ENCODE measurements at regions of chr6 and their contacts with region 1.

Region 1: GRCh38 chr6:145929037-145929633 is 35.0 kb downstream of the SHPRH start:
- DNase-seq: peak; percentile 53
- H3K4me3 ChIP-seq: no peak overlapping the region
- H3K27ac ChIP-seq: no peak overlapping the region
- H3K4me1 ChIP-seq: no peaks in the 10 kb centered on the region
- H3K27me3 ChIP-seq: no peaks in the 10 kb centered on the region
- CTCF ChIP-seq: peak; percentile 38 to 50
- POLR2A ChIP-seq: no peak

Region 2: GRCh38 chr6:145866456-145867396 is 62.4 kb before region 1 on chr6:
- CTCF ChIA-PET with region 1: no interaction called
- POLR2A ChIA-PET with region 1: no interaction called
- dilution Hi-C with region 1: no loop called
- intact Hi-C with region 1: no loop called
- DNase-seq: no peak
- H3K4me3 ChIP-seq: no peak overlapping the region
- H3K27ac ChIP-seq: no peak overlapping the region
- H3K4me1 ChIP-seq: no peaks in the 10 kb centered on the region
- H3K27me3 ChIP-seq: no peaks in the 10 kb centered on the region
- CTCF ChIP-seq: no peak
- POLR2A ChIP-seq: no peak

Region 3: GRCh38 chr6:145948328-145948727 is 19.2 kb after region 1 on chr6:
- CTCF ChIA-PET with region 1: interaction called, 12 read pairs
- POLR2A ChIA-PET with region 1: no interaction called
- dilution Hi-C with region 1: no loop called
- intact Hi-C with region 1: no loop called
- DNase-seq: no peak
- H3K4me3 ChIP-seq: no peak overlapping the region
- H3K27ac ChIP-seq: no peak overlapping the region
- H3K4me1 ChIP-seq: no peaks in the 10 kb centered on the region
- H3K27me3 ChIP-seq: no peaks in the 10 kb centered on the region
- CTCF ChIP-seq: no peak
- POLR2A ChIP-seq: no peak

Region 4: GRCh38 chr6:145963216-145964068 is 34.3 kb after region 1 on chr6:
- CTCF ChIA-PET with region 1: interaction called, 13 read pairs
- POLR2A ChIA-PET with region 1: no interaction called
- dilution Hi-C with region 1: no loop called
- intact Hi-C with region 1: no loop called
- DNase-seq: peak; percentile 68
- H3K4me3 ChIP-seq: peak overlapping the region; percentile 73 to 78 (median 77)
- H3K27ac ChIP-seq: peak overlapping the region; percentile 66
- H3K4me1 ChIP-seq: peaks cover 11% of the 10 kb centered on the region
- H3K27me3 ChIP-seq: no peaks in the 10 kb centered on the region
- CTCF ChIP-seq: no peak
- POLR2A ChIP-seq: no peak

Region 5: DNA sequence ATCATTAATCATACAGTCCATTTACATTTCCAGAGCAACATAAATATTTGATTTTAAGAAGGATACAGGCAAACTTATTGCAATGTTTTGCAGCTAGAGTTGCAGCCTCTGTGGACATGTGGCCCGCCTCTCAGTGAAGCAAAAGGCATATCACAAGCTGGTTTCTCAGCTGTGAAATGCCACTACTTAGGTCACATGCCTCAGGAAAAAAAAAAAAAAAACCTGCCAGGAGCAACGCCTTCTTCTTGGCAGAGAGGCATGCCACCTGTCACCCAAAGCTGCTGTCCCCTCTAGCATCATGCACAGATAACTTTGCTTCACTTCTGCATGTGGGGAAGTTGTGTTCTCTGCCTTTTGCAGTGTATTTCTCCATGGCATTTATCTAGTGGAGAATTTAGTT is 118.2 kb after region 1 on chr6:
- CTCF ChIA-PET with region 1: no interaction called
- POLR2A ChIA-PET with region 1: no interaction called
- dilution Hi-C with region 1: no loop called
- intact Hi-C with region 1: no loop called
- DNase-seq: no peak
- H3K4me3 ChIP-seq: no peak overlapping the region
- H3K27ac ChIP-seq: no peak overlapping the region
- H3K4me1 ChIP-seq: peaks cover 3% of the 10 kb centered on the region
- H3K27me3 ChIP-seq: no peaks in the 10 kb centered on the region
- CTCF ChIP-seq: no peak
- POLR2A ChIP-seq: no peak

Region 6: DNA sequence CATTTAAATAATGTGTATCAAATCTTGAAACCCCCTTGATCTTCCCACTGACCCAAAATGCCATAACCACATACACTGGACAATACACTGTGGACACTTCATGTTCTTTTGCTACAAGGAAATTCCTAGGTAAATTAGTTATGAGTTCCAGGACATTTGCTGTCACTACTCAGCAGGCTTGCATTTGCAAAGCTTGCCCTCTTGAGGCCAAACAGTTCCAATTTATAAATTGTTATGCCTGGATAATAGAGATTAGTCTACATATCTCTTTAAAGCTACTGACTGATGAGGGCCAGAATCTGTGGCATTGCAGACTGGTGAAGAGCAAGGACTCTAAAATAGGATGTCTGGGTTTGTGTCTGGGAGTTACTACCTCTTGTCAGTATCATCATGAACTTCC is 597.1 kb after region 1 on chr6:
- CTCF ChIA-PET with region 1: interaction called, 18 read pairs
- POLR2A ChIA-PET with region 1: no interaction called
- dilution Hi-C with region 1: no loop called
- intact Hi-C with region 1: loop called (anchors 2 kb)
- DNase-seq: peak; percentile 19
- H3K4me3 ChIP-seq: no peak overlapping the region
- H3K27ac ChIP-seq: no peak overlapping the region
- H3K4me1 ChIP-seq: no peaks in the 10 kb centered on the region
- H3K27me3 ChIP-seq: no peaks in the 10 kb centered on the region
- CTCF ChIP-seq: peak in 1 of 2 donors; percentile 15
- POLR2A ChIP-seq: no peak

Region 7: GRCh38 chr6:146770965-146771735 is 842.0 kb after region 1 on chr6:
- CTCF ChIA-PET with region 1: interaction called, 9 read pairs
- POLR2A ChIA-PET with region 1: no interaction called
- dilution Hi-C with region 1: no loop called
- intact Hi-C with region 1: loop called (anchors 2 kb)
- DNase-seq: peak; percentile 70
- H3K4me3 ChIP-seq: no peak overlapping the region
- H3K27ac ChIP-seq: peak overlapping the region; percentile 33
- H3K4me1 ChIP-seq: peaks cover 7% of the 10 kb centered on the region
- H3K27me3 ChIP-seq: no peaks in the 10 kb centered on the region
- CTCF ChIP-seq: no peak
- POLR2A ChIP-seq: peak; percentile 40

Measured in endothelial cell of umbilical vein (primary cell).